ENCODE measurements at regions of chr7 and their contacts with region 1.

Region 1: DNA sequence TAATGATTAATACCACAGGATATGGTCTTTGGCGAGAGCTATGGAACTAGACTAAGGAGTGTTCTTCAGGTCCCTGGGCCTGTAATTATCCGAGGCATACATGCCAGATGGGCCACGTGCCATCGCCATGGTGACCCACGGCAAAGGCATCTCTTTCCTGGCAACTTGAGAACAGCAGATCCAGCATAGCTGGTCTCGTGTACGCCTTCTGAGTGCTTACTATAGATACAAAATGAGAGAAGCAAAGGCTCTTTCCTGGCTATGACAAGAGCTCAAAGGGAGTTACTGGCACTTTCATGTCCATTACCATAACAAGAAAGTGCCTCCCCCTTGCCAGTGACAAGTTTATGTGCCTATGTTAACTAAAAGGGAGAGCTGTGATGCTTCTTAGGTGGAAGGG is 26.0 kb upstream of the GLI3 start:
- DNase-seq: peak; percentile 77
- ATAC-seq: peak; percentile 87 to 97
- H3K4me3 ChIP-seq: no peak overlapping the region
- H3K27ac ChIP-seq: peak overlapping the region; percentile 60 to 80 (median 70)
- H3K4me1 ChIP-seq: peaks cover 10 to 16% of the 10 kb centered on the region in 2 donors
- H3K27me3 ChIP-seq: no peaks in the 10 kb centered on the region
- CTCF ChIP-seq: no peak
- POLR2A ChIP-seq: no peak

Region 2: GRCh38 chr7:42237162-42237821 is 25.7 kb before region 1 on chr7 and contains the start of gene GLI3:
- in situ Hi-C with region 1: no loop called
- intact Hi-C with region 1: loop called (anchors 2 kb)
- DNase-seq: peak; percentile 68 to 74
- ATAC-seq: peak; percentile 81 to 86
- H3K4me3 ChIP-seq: peak within 1 kb of the TSS; percentile 78 to 89 (median 82)
- H3K27ac ChIP-seq: peak within 1 kb of the TSS; percentile 78 to 88 (median 82)
- H3K4me1 ChIP-seq: peaks cover 9 to 16% of the 10 kb centered on the region in 2 donors
- H3K27me3 ChIP-seq: peaks cover 0 to 18% (median 17%) of the 10 kb centered on the region in 3 donors
- CTCF ChIP-seq: peak in 2 of 5 experiments; percentile 20 to 38
- POLR2A ChIP-seq: peak; percentile 20 to 63
- total RNA-seq, gene GLI3: 0.46 to 1.6 (median 0.81) TPM